WTC11 (cell line): ENCODE measurements at regions of chr5 and their contacts with region 1.

Region 1: DNA sequence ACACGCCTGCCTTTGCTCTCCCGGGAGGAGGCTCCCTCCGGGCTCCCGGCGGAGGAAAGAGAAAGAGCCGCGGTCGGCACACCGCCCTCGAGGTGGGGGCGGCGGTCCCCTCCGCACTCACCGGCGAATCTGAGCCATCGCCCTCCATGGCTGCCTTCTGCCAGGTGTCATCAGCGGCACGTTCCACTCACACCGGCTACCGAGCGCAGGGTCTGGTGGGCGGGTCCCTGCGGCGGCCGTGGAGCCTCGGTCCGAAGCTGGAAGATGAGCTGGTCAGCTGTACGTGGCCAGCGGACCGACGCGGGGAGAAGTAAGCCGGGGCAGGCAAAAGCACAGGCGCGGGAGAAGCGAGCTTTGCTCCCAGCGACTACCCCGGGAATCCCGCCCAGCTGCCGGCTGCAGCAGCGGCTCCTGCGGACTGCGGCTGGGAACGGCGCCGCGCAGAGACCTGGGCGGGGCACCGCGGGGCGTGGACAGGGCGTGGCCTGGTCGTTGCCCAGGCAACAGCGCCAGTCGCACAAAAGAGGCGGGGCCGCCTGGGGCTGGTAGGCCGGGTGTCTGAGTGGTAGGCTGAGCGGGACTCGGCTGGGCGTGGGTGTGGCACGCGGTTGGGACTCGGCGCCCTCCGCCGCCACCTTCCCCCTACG is at the start of gene TRIM36:
- DNase-seq: peak; percentile 97
- ATAC-seq: peak; percentile 86
- H3K4me3 Mint-ChIP-seq: peak within 1 kb of the TSS; percentile 85
- H3K27ac Mint-ChIP-seq: 0 out of 2 replicates have a peak within 1 kb of the TSS, but pooled peaks have one; percentile 45
- H3K4me1 Mint-ChIP-seq: peaks cover 14% of the 10 kb centered on the region
- H3K27me3 Mint-ChIP-seq: peaks cover 54% of the 10 kb centered on the region
- CTCF ChIP-seq: no peak
- total RNA-seq, gene TRIM36: 17.4 to 24.1 TPM (median 20.0 TPM) in 3 replicates

Region 2: DNA sequence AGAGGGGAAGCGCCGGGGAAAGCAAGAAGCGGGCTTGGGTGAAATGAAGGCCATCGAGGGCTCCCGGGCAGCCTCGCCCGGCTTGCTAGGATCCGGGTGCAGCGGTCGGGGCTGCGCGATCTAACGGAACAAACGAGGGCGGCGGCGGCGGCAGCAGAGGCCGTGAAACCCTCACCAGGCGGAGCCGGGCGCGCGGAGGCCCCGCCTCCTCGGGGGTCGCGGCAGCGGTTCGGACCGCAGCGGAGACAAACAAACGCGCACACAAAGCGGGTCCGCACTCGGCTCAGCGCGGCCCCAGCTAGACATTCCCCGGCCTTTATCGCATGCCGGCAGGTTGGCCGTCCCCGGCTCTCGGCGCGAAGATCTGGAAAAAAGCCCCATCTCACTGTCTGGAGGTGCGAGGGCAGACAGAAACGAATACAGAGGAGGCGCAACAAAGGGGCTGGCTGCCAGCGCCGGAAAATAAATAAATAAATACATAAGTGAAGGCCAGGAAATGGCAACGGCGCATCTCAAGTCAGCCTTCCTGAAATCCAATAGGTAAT is 10.6 kb after region 1 on chr5:
- CTCF ChIA-PET with region 1: interaction called, 3 read pairs
- POLR2A ChIA-PET with region 1: interaction called, 27 read pairs
- DNase-seq: peak; percentile 79
- ATAC-seq: peak; percentile 78
- H3K4me3 Mint-ChIP-seq: peak overlapping the region; percentile 78
- H3K27ac Mint-ChIP-seq: no peak overlapping the region
- H3K4me1 Mint-ChIP-seq: peaks cover 15% of the 10 kb centered on the region
- H3K27me3 Mint-ChIP-seq: peaks cover 70% of the 10 kb centered on the region
- CTCF ChIP-seq: no peak